Activated T-helper 2 cell treated with anti-CD3 and anti-CD28 coated beads, Interferon-gamma antibody, Interleukin-2, Interleukin-4, amounts not matched to agents 10 μg/mL and 5 μg/mL and 100 μg/mL, durations not matched to agents 14 hours and 24 hours and 36 hours (primary cell): ENCODE measurements at regions of chr2 and their contacts with region 1.

Region 1: GRCh38 chr2:220107380-220107791 is 480.0 kb downstream of the SLC4A3 start:
- DNase-seq: no peak
- H3K4me3 Mint-ChIP-seq: no peak overlapping the region
- H3K27ac Mint-ChIP-seq: no peak overlapping the region
- H3K4me1 Mint-ChIP-seq: no peaks in the 10 kb centered on the region
- H3K27me3 Mint-ChIP-seq: no peaks in the 10 kb centered on the region

Region 2: GRCh38 chr2:219947575-219947974 is 159.8 kb before region 1 on chr2:
- intact Hi-C with region 1: no loop called
- DNase-seq: no peak
- H3K4me3 Mint-ChIP-seq: no peak overlapping the region
- H3K27ac Mint-ChIP-seq: no peak overlapping the region
- H3K4me1 Mint-ChIP-seq: no peaks in the 10 kb centered on the region
- H3K27me3 Mint-ChIP-seq: no peaks in the 10 kb centered on the region

Region 3: DNA sequence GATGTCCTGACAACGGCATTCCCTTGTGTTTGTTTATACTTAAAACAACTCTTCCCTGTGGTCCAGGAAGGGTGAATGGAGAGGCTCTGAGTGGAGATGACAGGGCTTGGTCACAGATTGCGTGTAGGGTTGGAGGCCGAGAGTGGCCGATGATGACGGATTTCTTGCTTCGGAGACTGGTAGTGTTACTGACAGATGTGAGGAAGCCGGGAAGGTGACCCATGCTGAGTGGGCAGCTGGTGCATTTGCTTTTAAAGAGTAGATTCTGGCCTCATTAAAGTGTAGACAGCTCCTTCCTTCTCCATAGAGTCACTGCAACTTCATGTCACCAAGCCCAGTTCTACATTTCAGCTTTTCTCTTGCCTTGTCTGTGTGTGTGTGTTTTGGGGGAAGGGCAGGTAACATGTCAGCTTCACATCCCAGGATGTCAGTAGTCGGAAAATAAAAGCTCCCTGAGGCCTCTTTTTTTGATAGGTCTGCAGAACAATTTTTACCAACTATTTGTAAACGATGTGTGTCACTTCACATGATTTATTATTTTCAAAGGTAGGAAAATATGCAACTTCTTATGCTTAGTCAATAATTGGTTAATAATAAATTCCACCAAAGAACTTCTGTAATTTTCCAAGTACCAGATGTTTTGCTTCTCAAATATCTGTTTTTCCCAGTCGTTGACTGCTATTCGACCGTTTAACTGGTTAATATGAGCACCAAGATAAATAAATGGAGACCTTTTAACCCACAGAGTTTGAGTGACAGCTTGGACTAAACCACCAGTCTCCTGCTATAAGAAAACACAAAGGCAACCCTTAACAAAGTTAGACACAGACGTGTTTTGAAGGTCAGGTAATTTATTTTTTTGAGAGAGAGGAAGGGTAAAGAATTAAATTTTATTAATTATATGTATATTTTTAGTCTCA is 43.0 kb before region 1 on chr2:
- intact Hi-C with region 1: loop called (anchors 1 kb)
- DNase-seq: no peak
- H3K4me3 Mint-ChIP-seq: no peak overlapping the region
- H3K27ac Mint-ChIP-seq: no peak overlapping the region
- H3K4me1 Mint-ChIP-seq: no peaks in the 10 kb centered on the region
- H3K27me3 Mint-ChIP-seq: no peaks in the 10 kb centered on the region